ENCODE measurements at regions of chr16 and their contacts with region 1.

Region 1: GRCh38 chr16:82031116-82032084 is 3.7 kb upstream of the HSD17B2 start:
- DNase-seq: peak; percentile 41
- H3K4me3 Mint-ChIP-seq: no peak overlapping the region
- H3K27ac Mint-ChIP-seq: no peak overlapping the region
- H3K4me1 Mint-ChIP-seq: peaks cover 39% of the 10 kb centered on the region
- H3K27me3 Mint-ChIP-seq: no peaks in the 10 kb centered on the region
- CTCF ChIP-seq: no peak

Region 2: DNA sequence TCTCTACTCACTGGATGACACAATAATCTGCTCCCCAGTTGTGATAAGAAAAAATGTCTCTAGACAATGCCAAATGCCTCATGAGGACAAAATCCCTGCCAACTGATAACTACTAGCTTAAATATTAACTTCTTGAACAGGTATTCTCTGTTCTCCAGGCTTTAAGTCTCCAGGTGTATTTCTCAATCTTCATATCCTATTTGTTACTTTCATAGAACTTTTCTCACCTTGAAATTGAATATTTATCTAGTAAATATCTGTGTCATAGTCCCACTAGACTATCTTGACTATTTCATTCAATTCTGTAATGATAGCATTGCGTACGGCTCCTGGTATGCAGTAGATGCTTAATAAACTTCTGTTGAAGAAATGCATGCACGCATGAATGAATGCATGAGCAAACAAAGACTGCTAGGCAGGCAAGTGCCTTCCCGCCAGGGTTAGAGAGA is 19.5 kb after region 1 on chr16:
- CTCF ChIA-PET with region 1: interaction called, 5 read pairs
- intact Hi-C with region 1: loop called (anchors 2 kb)
- DNase-seq: no peak
- H3K4me3 Mint-ChIP-seq: peak overlapping the region; percentile 3
- H3K27ac Mint-ChIP-seq: peak overlapping the region; percentile 32
- H3K4me1 Mint-ChIP-seq: peaks cover 38% of the 10 kb centered on the region
- H3K27me3 Mint-ChIP-seq: no peaks in the 10 kb centered on the region
- CTCF ChIP-seq: no peak

Region 3: DNA sequence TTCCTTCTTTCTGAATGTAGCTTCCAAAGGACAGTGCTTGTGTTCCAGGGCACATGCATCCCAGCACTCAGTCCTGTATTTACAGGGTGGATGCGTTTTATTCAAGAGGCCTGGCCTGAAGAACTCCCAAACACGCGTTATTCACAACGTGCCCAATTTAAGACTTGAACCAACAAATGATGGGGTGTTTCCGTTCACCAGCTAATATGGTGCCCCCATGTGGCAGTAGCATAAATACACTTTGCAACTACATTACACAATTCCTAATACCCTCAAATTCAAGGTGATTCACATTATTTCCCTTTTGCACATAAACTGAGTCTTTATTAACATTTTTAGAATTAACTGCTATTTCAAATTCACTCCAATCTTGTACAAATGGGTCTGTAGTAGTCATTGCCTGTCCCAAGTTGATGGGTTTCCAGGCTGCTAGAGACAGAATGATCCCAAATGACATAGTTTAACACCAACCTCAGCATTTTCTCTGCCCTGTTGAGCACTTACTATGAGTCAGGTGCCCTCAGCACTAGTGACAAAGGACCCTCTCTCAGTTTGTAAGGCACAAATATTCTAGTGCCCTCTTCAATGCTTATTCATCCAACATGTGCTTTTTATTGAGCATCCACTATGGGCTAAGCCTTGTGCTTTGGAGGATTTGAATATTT is 30.6 kb after region 1 on chr16:
- CTCF ChIA-PET with region 1: interaction called, 5 read pairs
- intact Hi-C with region 1: loop called (anchors 1 kb)
- DNase-seq: peak; percentile 59
- H3K4me3 Mint-ChIP-seq: no peak overlapping the region
- H3K27ac Mint-ChIP-seq: peak overlapping the region; percentile 15
- H3K4me1 Mint-ChIP-seq: peaks cover 29% of the 10 kb centered on the region
- H3K27me3 Mint-ChIP-seq: no peaks in the 10 kb centered on the region
- CTCF ChIP-seq: peak; percentile 68

Region 4: DNA sequence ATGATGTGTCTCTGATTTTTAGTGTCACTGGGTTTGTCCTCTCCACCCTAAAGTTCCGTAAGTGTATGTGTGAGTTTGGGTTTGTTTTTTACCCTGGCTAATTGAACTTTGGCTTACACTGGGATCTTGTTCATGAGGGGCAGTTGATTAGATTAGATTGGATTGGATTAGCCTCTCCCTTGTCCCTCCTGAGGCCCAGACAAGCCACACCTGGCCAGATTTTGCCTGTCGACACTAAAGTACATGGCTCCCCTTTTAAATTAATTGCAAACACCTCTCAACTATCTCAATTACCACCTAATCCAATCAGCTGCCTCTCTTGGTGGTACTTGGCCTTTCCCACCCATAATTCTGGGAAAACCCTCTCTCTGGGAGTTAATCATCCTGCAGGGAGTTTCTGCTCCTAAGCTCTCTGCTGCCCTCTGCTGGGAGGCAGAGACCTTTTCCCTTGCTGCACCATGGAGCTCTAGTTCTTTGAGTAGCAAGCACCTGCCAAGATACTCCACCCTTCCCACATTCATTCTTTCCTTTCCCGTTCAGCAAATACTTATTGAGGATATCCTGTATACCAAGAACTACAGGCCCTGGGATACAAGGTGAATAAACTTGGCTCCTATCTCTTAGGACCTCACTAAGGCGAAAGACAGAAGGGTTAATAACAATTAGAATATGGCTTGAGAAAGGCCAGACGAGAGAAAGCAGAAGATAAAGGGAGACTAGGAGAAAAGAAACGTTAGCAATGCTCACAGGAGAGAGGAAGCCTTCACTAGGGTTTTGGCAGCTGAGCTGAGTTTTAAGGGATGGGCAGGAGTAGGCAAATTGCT is 198.6 kb after region 1 on chr16:
- CTCF ChIA-PET with region 1: interaction called, 12 read pairs
- intact Hi-C with region 1: loop called (anchors 1 kb)
- DNase-seq: peak; percentile 90
- H3K4me3 Mint-ChIP-seq: no peak overlapping the region
- H3K27ac Mint-ChIP-seq: no peak overlapping the region
- H3K4me1 Mint-ChIP-seq: peaks cover 6% of the 10 kb centered on the region
- H3K27me3 Mint-ChIP-seq: peaks cover 68% of the 10 kb centered on the region
- CTCF ChIP-seq: peak; percentile 96

Measured in Calu3 (cell line).